Mammary epithelial cell (primary cell): ENCODE measurements at regions of chr3 and their contacts with region 1.

Region 1: DNA sequence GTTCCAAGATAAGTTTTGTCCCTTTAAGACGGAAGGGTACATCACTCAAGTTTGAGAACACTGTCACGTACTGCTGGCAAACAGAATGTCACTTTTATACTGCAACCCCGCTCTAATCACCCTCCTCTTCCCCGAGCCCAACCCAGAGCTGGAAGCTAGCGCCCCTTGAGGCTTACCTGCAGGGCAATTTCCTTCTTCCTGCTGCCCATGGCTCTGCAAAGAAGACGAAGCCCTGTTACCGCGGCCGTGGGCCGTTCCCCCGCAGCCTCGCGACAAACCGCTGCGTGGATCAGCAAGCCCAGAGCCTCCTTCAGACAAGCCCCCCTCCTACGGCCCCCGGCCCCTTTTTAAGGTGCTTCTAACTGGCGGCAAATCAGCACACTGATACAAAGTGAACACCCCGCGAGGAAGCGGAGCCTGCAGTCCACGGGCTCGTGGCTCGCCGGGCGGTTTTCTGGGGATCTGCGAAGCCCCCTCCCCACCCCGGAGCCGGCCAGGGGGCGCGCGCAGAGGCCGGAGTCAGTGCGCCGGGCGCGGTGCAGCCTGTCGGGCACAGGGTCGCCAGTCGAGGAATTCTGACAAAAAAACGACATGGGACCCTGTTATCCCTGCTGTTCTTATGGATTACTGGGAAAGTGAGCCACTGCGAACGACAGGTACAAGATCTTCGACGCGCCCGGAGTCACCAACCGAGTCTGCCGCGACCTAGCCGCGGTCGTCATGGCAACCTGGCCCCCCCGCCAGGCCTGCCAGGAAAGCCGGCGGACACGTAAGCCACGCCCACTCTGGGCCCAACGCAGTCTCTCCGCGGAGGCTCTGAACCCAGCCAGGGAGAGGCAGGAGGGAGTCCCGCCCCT is at the start of gene NME9:
- DNase-seq: peak; percentile 52
- H3K4me3 ChIP-seq: peak within 1 kb of the TSS; percentile 43 to 54 (median 46)
- H3K27ac ChIP-seq: no peak within 1 kb of the TSS
- H3K4me1 ChIP-seq: peaks cover 44% of the 10 kb centered on the region
- H3K27me3 ChIP-seq: no peaks in the 10 kb centered on the region
- CTCF ChIP-seq: peak; percentile 52 to 58
- total RNA-seq, gene NME9: 0.50 TPM in 1 of 2 donors, not detected in the other

Region 2: GRCh38 chr3:137217733-137218132 is 1111.6 kb before region 1 on chr3:
- CTCF ChIA-PET with region 1: no interaction called
- dilution Hi-C with region 1: no loop called
- in situ Hi-C with region 1: no loop called
- intact Hi-C with region 1: no loop called
- DNase-seq: no peak
- H3K4me3 ChIP-seq: no peak overlapping the region
- H3K27ac ChIP-seq: no peak overlapping the region
- H3K4me1 ChIP-seq: no peaks in the 10 kb centered on the region
- H3K27me3 ChIP-seq: no peaks in the 10 kb centered on the region
- CTCF ChIP-seq: peak; percentile 11 to 16

Region 3: DNA sequence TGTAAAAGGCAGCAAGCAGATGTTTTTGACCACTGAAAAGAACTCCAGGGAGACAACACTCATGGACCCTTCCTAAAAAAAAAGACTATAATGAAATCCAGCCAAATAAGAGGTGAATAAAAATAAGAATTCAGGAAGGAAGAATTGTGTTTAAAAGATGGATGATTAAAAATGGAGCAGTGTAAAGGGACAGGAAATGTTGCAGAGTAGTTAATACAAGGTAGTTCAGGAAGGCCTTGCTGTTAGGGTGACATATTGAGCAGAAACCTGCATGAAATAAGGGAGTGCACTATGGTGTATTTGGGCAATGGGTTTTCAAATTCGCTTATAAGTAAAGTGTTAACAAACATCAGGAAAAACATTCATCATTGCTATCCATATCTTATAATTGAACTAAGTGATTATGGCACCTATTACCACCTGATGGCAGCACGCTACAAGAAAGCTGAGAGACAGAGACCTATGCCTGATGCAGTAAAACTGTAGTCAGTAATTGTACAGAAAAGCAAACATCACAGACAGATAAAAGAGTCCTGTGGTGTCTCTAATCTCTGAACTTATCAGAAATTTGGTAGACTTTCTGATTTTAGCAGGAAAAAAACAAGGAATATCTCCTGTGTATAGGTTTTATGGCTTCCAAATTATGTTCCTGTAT is 148.9 kb before region 1 on chr3:
- CTCF ChIA-PET with region 1: no interaction called
- dilution Hi-C with region 1: no loop called
- in situ Hi-C with region 1: no loop called
- intact Hi-C with region 1: loop called (anchors 1 kb)
- DNase-seq: peak; percentile 37
- H3K4me3 ChIP-seq: no peak overlapping the region
- H3K27ac ChIP-seq: no peak overlapping the region
- H3K4me1 ChIP-seq: peaks cover 7% of the 10 kb centered on the region
- H3K27me3 ChIP-seq: no peaks in the 10 kb centered on the region
- CTCF ChIP-seq: peak; percentile 46 to 71

Region 4: GRCh38 chr3:138381950-138382688 is 52.8 kb after region 1 on chr3:
- CTCF ChIA-PET with region 1: interaction called, 3 read pairs
- dilution Hi-C with region 1: loop called (anchors 5 kb)
- in situ Hi-C with region 1: no loop called
- intact Hi-C with region 1: no loop called
- DNase-seq: peak; percentile 84
- H3K4me3 ChIP-seq: no peak overlapping the region
- H3K27ac ChIP-seq: peak overlapping the region; percentile 57
- H3K4me1 ChIP-seq: peaks cover 21% of the 10 kb centered on the region
- H3K27me3 ChIP-seq: no peaks in the 10 kb centered on the region
- CTCF ChIP-seq: no peak

Region 5: DNA sequence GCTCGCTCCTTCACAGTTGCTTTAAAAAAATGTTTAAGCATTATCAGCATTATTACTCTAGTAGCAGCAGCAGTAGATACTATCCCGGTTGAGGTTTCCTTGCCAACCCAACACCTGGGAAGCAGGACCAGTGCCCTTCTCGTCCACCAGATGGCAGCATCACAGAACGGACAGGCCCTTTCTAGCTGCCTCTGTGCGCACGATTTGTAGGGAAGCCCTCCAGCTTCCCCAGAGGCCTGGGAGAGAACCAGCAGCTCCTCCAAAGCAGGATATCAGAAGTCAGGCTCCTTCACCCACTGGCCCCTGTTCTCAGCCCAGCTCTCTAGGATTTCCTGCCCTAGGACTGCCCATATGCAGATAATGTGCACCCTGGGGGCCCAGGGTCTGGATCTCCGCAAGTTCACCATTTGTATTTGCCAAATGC is 88.2 kb after region 1 on chr3:
- CTCF ChIA-PET with region 1: no interaction called
- dilution Hi-C with region 1: no loop called
- in situ Hi-C with region 1: no loop called
- intact Hi-C with region 1: loop called (anchors 5 kb)
- DNase-seq: peak; percentile 69
- H3K4me3 ChIP-seq: no peak overlapping the region
- H3K27ac ChIP-seq: no peak overlapping the region
- H3K4me1 ChIP-seq: no peaks in the 10 kb centered on the region
- H3K27me3 ChIP-seq: no peaks in the 10 kb centered on the region
- CTCF ChIP-seq: peak; percentile 97 to 98

Region 6: DNA sequence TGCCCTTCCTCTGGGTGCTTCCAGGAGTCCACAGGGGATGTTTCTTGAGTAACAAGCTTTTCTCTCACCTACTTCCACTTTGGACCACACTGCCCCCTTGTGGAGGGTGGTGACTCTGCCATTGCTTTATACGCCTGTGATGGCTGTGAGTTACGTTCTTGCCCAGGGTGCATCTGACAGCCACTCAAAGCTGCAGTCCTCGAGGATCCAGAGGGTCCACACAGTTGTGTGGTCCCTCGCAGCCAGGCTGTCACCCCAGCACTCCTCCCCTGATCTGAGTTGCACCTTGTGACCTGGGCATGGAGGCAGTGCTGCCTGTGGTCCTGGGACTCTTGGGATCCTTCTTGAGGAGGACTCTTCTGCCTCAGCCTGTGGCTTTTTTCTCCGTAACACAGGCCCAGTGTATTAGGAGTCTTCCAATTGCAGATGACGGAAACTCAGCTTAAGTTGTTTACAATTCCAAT is 594.2 kb after region 1 on chr3:
- CTCF ChIA-PET with region 1: no interaction called
- dilution Hi-C with region 1: no loop called
- in situ Hi-C with region 1: no loop called
- intact Hi-C with region 1: loop called (anchors 1 kb)
- DNase-seq: peak; percentile 78
- H3K4me3 ChIP-seq: no peak overlapping the region
- H3K27ac ChIP-seq: no peak overlapping the region
- H3K4me1 ChIP-seq: peaks cover 16% of the 10 kb centered on the region
- H3K27me3 ChIP-seq: no peaks in the 10 kb centered on the region
- CTCF ChIP-seq: peak; percentile 94 to 98